HCT116 (cell line): ENCODE measurements at regions of chr2 and their contacts with region 1.

Region 1: DNA sequence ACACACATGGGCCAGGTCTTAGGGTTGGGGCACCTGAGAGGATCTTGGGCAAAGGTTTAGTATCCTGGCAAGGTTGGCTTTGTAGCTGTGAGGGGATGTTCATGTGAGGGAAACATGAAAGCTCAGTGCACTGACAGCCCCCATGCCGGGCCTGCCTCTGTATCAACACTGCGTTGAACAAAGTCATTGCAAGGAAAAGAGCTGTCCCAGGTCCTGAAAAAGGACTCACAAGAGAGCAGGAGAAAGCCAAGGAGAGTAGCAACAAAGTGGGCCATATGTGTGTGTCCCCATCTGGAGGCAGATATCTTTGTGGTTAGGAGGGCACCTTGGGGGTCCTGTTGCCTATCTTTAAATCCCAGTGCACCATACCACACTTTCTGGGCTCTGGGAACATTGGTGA is 237.8 kb upstream of the THSD7B start:
- DNase-seq: no peak
- ATAC-seq: no peak
- H3K4me3 ChIP-seq: no peak overlapping the region
- H3K27ac ChIP-seq: no peak overlapping the region
- H3K4me1 ChIP-seq: no peaks in the 10 kb centered on the region
- H3K27me3 ChIP-seq: peaks cover 5% of the 10 kb centered on the region
- CTCF ChIP-seq: no peak
- POLR2A ChIP-seq: no peak
- RAD21 ChIP-seq: no peak

Region 2: GRCh38 chr2:136375017-136375901 is 152.3 kb before region 1 on chr2:
- CTCF ChIA-PET with region 1: no interaction called
- POLR2A ChIA-PET with region 1: no interaction called
- RAD21 ChIA-PET with region 1: no interaction called
- intact Hi-C with region 1: no loop called
- DNase-seq: no peak
- ATAC-seq: no peak
- H3K4me3 ChIP-seq: no peak overlapping the region
- H3K27ac ChIP-seq: no peak overlapping the region
- H3K4me1 ChIP-seq: no peaks in the 10 kb centered on the region
- H3K27me3 ChIP-seq: no peaks in the 10 kb centered on the region
- CTCF ChIP-seq: no peak
- POLR2A ChIP-seq: no peak
- RAD21 ChIP-seq: no peak

Region 3: GRCh38 chr2:136582628-136583205 is 55.2 kb after region 1 on chr2:
- CTCF ChIA-PET with region 1: no interaction called
- POLR2A ChIA-PET with region 1: no interaction called
- RAD21 ChIA-PET with region 1: no interaction called
- intact Hi-C with region 1: loop called (anchors 2 kb)
- DNase-seq: no peak
- ATAC-seq: no peak
- H3K4me3 ChIP-seq: no peak overlapping the region
- H3K27ac ChIP-seq: no peak overlapping the region
- H3K4me1 ChIP-seq: no peaks in the 10 kb centered on the region
- H3K27me3 ChIP-seq: no peaks in the 10 kb centered on the region
- CTCF ChIP-seq: no peak
- POLR2A ChIP-seq: no peak
- RAD21 ChIP-seq: no peak